ENCODE measurements at regions of chr6 and their contacts with region 1.

Region 1: GRCh38 chr6:87322304-87323212 is at the start of gene SMIM8:
- DNase-seq: peak; percentile 67 to 94 (median 81)
- ATAC-seq: peak; percentile 100
- H3K4me3 ChIP-seq: peak within 1 kb of the TSS; percentile 82
- H3K4me3 Mint-ChIP-seq: peak within 1 kb of the TSS; percentile 94 to 99 (median 98)
- H3K27ac ChIP-seq: peak within 1 kb of the TSS; percentile 80
- H3K27ac Mint-ChIP-seq: peak within 1 kb of the TSS; percentile 77 to 95 (median 93)
- H3K4me1 ChIP-seq: no peaks in the 10 kb centered on the region
- H3K4me1 Mint-ChIP-seq: peaks cover 14 to 32% (median 26%) of the 10 kb centered on the region in 7 donors
- H3K27me3 ChIP-seq: no peaks in the 10 kb centered on the region
- H3K27me3 Mint-ChIP-seq: peaks cover 0 to 6% (median 5%) of the 10 kb centered on the region in 5 donors
- total RNA-seq, gene SMIM8: 7.3 to 15.7 (median 10.5) TPM

Region 2: GRCh38 chr6:87277123-87277522 is 45.4 kb before region 1 on chr6:
- CTCF ChIA-PET with region 1: no interaction called
- POLR2A ChIA-PET with region 1: no interaction called
- intact Hi-C with region 1: loop called in 1 of 2 experiments (anchors 2 kb)
- DNase-seq: no peak
- ATAC-seq: no peak
- H3K4me3 ChIP-seq: no peak overlapping the region
- H3K4me3 Mint-ChIP-seq: no peak overlapping the region
- H3K27ac ChIP-seq: no peak overlapping the region
- H3K27ac Mint-ChIP-seq: peak overlapping the region in 1 of 9 donors; percentile 49
- H3K4me1 ChIP-seq: no peaks in the 10 kb centered on the region
- H3K4me1 Mint-ChIP-seq: peaks cover 5 to 34% (median 25%) of the 10 kb centered on the region in 7 donors
- H3K27me3 ChIP-seq: no peaks in the 10 kb centered on the region
- H3K27me3 Mint-ChIP-seq: peaks cover 0 to 2% (median 0%) of the 10 kb centered on the region in 5 donors

Region 3: DNA sequence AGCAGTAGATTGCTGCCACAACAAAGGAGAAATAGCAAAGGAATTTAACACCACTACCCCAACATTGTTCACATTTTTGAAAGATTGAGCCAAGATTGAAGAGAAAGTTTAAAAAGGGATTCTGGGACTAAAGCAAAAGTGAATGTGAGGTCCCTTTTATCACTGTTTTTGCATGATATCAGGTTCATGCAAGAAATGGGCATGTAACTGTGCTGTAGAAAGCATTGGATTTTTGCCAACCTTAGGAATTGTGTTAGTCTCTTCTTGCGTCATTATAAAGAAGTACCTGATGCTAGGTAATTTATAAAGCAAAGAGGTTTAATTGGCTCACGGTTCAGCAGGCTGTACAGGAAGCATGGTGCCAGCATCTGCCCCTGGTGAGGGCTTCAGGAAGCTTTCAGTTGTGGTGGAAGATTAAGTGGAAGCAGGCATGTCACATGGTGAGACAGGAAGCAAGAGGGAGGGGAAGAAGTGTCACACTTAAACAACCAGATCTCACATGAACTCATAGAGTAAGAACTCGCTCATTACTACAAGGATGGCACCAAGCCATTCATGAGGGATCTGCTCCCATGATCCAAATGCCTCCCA is 11.1 kb after region 1 on chr6:
- CTCF ChIA-PET with region 1: no interaction called
- POLR2A ChIA-PET with region 1: no interaction called
- intact Hi-C with region 1: loop called in 1 of 2 experiments (anchors 1 kb)
- DNase-seq: peak in 6 of 9 donors; percentile 3 to 32 (median 16)
- ATAC-seq: peak; percentile 41
- H3K4me3 ChIP-seq: no peak overlapping the region
- H3K4me3 Mint-ChIP-seq: peak overlapping the region; percentile 19 to 66 (median 48)
- H3K27ac ChIP-seq: no peak overlapping the region
- H3K27ac Mint-ChIP-seq: peak overlapping the region; percentile 31 to 86 (median 66)
- H3K4me1 ChIP-seq: peaks cover 0 to 8% of the 10 kb centered on the region in 2 donors
- H3K4me1 Mint-ChIP-seq: peaks cover 14 to 49% (median 25%) of the 10 kb centered on the region in 7 donors
- H3K27me3 ChIP-seq: no peaks in the 10 kb centered on the region
- H3K27me3 Mint-ChIP-seq: no peaks in the 10 kb centered on the region

Region 4: GRCh38 chr6:87472525-87473418 is 150.2 kb after region 1 on chr6 and contains the start of gene SLC35A1:
- CTCF ChIA-PET with region 1: no interaction called
- POLR2A ChIA-PET with region 1: interaction called, 3 read pairs
- intact Hi-C with region 1: loop called (anchors 1 kb)
- DNase-seq: peak; percentile 78 to 92 (median 87)
- ATAC-seq: peak; percentile 97
- H3K4me3 ChIP-seq: peak within 1 kb of the TSS; percentile 81
- H3K4me3 Mint-ChIP-seq: peak within 1 kb of the TSS; percentile 88 to 99 (median 98)
- H3K27ac ChIP-seq: peak within 1 kb of the TSS; percentile 93
- H3K27ac Mint-ChIP-seq: peak within 1 kb of the TSS; percentile 95 to 100 (median 99)
- H3K4me1 ChIP-seq: peaks cover 9 to 11% of the 10 kb centered on the region in 2 donors
- H3K4me1 Mint-ChIP-seq: peaks cover 14 to 31% (median 20%) of the 10 kb centered on the region in 7 donors
- H3K27me3 ChIP-seq: no peaks in the 10 kb centered on the region
- H3K27me3 Mint-ChIP-seq: peaks cover 2 to 14% (median 9%) of the 10 kb centered on the region in 5 donors
- total RNA-seq, gene SLC35A1: 10.4 to 23.4 (median 15.6) TPM

Region 5: GRCh38 chr6:87589693-87590549 is 267.4 kb after region 1 on chr6 and contains the starts of genes ORC3 and RARS2:
- CTCF ChIA-PET with region 1: no interaction called
- POLR2A ChIA-PET with region 1: no interaction called
- intact Hi-C with region 1: loop called in 1 of 2 experiments (anchors 1 kb)
- DNase-seq: peak; percentile 86 to 97 (median 92)
- ATAC-seq: peak; percentile 100
- H3K4me3 ChIP-seq: peak within 1 kb of the TSS; percentile 89
- H3K4me3 Mint-ChIP-seq: peak within 1 kb of the TSS; percentile 87 to 100 (median 96)
- H3K27ac ChIP-seq: peak within 1 kb of the TSS; percentile 92
- H3K27ac Mint-ChIP-seq: peak within 1 kb of the TSS; percentile 87 to 97 (median 95)
- H3K4me1 ChIP-seq: peaks cover 22 to 32% of the 10 kb centered on the region in 2 donors
- H3K4me1 Mint-ChIP-seq: peaks cover 49 to 81% (median 75%) of the 10 kb centered on the region in 7 donors
- H3K27me3 ChIP-seq: no peaks in the 10 kb centered on the region
- H3K27me3 Mint-ChIP-seq: no peaks in the 10 kb centered on the region
- total RNA-seq, gene ORC3: 17.7 to 29.8 (median 27.6) TPM
- total RNA-seq, gene RARS2: 21.0 to 40.0 (median 24.2) TPM

Measured in naive thymus-derived CD4-positive, alpha-beta T cell (primary cell).